ENCODE measurements at regions of chrX and their contacts with region 1.

Region 1: DNA sequence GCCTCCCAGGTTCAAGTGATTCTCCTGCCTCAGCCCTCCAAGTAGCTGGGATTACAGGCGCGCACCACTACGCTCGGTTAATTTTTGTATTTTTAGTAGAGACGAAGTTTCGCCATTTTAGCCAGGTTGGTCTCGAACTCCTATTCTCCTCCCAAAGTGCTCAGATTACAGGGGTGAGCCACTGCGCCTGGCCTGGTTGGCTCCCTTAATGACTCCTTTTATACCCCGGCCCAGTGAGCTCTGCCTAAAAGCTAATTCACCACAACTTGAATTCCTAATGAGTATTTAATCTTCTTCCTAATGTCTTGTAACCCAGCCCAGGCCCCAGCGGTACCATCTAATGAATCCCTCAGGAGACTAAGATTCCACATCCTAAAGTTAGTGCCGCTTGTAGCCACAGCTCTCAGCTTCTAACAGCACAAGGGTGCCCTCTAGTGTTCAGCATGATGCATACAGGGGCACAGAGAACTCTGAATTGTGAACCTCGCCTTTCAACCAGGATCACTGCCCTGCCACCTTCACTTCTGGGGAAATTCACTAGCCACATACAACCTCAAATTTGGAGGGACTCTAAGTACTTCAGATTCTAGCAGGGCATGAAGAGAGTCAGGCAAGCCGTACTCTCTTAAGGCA is 89.5 kb downstream of the OR13H1 start:
- DNase-seq: peak; percentile 11
- H3K4me3 ChIP-seq: no peak overlapping the region
- H3K27ac ChIP-seq: no peak overlapping the region
- H3K4me1 ChIP-seq: no peaks in the 10 kb centered on the region
- H3K27me3 ChIP-seq: no peaks in the 10 kb centered on the region
- CTCF ChIP-seq: peak; percentile 51 to 61
- POLR2A ChIP-seq: no peak

Region 2: DNA sequence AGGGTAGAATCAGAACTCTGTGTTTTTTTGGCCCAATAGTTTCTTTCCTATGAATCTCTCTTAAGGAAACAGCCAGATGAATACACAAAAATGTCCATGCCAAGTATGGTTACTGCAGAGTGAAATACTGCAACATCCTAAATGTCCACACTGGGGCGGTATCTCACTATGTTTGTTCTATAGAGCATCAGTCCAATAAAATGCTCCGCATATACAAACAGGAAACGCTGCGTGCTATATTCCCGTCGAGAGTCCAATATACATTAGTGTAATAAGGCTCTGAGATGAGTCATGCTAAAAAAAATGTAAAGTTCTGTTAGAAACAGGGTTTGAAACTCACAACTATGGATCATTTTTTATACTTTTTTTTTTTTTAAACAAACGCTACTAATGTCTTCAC is 657.5 kb before region 1 on chrX:
- CTCF ChIA-PET with region 1: interaction called, 5 read pairs
- POLR2A ChIA-PET with region 1: no interaction called
- dilution Hi-C with region 1: no loop called
- intact Hi-C with region 1: loop called (anchors 1 kb)
- DNase-seq: peak; percentile 60
- H3K4me3 ChIP-seq: no peak overlapping the region
- H3K27ac ChIP-seq: no peak overlapping the region
- H3K4me1 ChIP-seq: no peaks in the 10 kb centered on the region
- H3K27me3 ChIP-seq: no peaks in the 10 kb centered on the region
- CTCF ChIP-seq: peak; percentile 26 to 40
- POLR2A ChIP-seq: no peak

Region 3: GRCh38 chrX:130994671-130995070 is 638.7 kb before region 1 on chrX:
- CTCF ChIA-PET with region 1: interaction called, 14 read pairs
- POLR2A ChIA-PET with region 1: no interaction called
- dilution Hi-C with region 1: no loop called
- intact Hi-C with region 1: loop called (anchors 1 kb)
- DNase-seq: peak; percentile 5
- H3K4me3 ChIP-seq: no peak overlapping the region
- H3K27ac ChIP-seq: no peak overlapping the region
- H3K4me1 ChIP-seq: no peaks in the 10 kb centered on the region
- H3K27me3 ChIP-seq: no peaks in the 10 kb centered on the region
- CTCF ChIP-seq: peak; percentile 28 to 32
- POLR2A ChIP-seq: no peak

Region 4: DNA sequence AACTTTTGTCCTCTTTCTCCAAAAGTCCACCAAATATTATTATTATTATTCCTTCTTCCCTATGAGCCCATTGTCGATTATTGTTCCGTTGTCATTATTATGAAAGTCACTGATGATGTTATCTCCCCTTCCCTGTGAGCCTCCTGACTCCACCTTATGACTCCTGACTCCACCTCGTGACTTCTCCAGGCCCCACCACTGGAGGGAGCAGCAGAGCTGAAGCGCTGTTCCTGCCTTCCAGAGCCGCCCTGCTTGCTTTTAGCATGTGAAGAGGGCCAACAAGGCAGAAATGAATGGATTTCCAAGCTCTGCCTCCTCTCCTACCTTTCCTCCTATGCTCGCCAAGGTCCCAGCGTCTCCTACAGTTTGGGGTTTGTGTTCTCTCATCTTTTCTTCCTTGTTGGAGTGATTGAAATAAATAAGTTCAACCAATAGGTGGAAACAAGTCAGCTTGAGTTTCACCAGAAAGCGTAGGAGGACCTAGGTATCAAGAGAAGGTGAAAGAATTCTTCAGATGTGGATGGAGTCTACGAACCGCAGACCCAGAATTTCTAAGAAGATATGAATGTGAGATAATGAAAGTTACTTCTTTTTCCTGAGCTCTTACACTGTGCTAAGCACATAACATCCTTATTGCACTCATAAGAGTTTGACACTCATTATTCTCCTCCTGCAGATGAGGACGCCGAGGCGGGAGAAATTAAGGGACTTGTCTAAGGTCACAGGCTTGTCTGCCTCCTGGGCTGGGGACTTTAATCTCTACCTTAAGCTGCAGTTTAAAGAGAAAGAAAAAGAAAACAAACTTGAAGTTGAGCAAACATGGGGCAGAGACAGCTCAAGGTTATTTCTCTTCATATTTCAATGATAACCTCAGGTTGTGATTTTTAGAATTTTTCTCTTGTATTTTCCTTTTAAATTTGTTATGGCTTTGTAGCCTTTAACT is 370.4 kb before region 1 on chrX:
- CTCF ChIA-PET with region 1: no interaction called
- POLR2A ChIA-PET with region 1: no interaction called
- dilution Hi-C with region 1: no loop called
- intact Hi-C with region 1: loop called (anchors 2 kb)
- DNase-seq: peak; percentile 1
- H3K4me3 ChIP-seq: no peak overlapping the region
- H3K27ac ChIP-seq: no peak overlapping the region
- H3K4me1 ChIP-seq: no peaks in the 10 kb centered on the region
- H3K27me3 ChIP-seq: no peaks in the 10 kb centered on the region
- CTCF ChIP-seq: peak in 1 of 2 donors; percentile 4
- POLR2A ChIP-seq: no peak